ENCODE measurements at regions of chr10 and their contacts with region 1.

Region 1: DNA sequence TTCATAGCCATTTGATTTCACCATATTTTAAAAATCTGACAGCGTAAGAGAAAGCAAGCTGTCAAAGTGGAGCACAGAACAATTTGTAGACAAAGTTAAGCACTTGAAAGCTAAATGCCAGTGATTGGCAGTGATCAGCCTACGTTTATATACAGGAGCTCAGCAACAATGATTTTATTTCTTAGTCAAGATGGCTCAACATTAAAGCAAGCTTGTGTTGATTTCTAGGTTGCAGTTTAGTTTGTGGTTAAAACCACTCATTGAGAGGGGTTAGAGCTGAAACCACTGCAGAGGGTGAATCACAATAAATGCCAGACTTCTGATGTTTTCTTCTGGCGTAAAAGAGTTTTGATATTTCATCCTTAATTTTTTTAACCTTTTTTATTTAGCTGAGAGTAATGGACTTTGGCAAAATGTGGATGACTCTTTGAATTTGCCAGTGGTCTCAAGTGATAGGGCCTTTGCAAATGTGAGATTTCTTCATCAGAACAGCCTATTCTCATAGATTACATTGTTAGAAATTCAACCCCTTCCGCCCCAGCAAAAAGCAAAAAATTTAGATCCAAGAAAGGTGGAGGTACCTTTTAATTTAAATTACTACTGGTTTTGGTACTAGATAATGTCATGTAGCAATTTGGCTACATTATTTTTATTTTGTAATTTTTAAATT is 73.8 kb downstream of the SHOC2 start:
- DNase-seq: peak; percentile 21
- H3K4me3 Mint-ChIP-seq: peak overlapping the region; percentile 63
- H3K27ac Mint-ChIP-seq: no peak overlapping the region
- H3K4me1 Mint-ChIP-seq: peaks cover 43% of the 10 kb centered on the region
- H3K27me3 Mint-ChIP-seq: no peaks in the 10 kb centered on the region

Region 2: DNA sequence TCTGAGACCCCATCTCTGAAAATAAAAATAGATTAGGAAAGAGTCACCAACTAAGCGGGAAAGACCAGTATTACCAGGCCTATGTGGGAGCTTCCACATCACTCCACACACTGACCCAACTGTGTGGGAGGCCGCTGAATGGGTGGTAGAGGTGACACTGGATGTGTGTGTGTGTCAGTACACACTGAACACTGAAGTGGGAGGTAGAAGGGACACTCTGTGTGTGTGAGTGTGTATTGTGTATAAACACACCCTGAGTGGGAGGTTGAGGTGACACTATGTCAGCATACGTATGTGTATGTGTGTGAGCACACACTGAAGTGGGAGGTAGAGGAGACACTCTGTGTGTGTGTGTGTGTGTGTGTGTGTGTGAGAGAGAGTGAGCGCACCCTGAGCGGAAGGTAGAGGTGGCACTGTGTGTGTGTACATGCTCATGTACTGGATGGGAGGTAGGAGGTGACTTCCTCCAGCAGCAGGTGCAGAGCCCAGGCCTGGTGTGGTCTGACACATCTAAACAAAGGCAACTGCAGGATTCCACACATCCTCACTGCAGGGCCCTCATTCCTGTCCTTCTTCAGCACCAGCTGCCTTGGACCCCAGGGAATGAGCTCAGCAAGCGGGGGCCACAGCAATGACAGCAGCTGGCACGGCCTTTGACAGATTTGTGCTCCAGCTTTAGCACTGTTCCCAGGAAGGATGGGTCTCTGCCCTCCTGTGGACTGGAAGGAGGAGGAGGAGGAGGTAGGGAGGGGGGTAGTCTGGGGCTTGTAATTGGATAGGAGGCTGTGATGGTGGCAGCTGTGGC is 375.5 kb before region 1 on chr10:
- intact Hi-C with region 1: loop called (anchors 1 kb)
- DNase-seq: no peak
- H3K4me3 Mint-ChIP-seq: peak overlapping the region; percentile 47
- H3K27ac Mint-ChIP-seq: peak overlapping the region; percentile 93
- H3K4me1 Mint-ChIP-seq: peaks cover 60% of the 10 kb centered on the region
- H3K27me3 Mint-ChIP-seq: peaks cover 7% of the 10 kb centered on the region

Region 3: GRCh38 chr10:110977662-110978061 is 15.5 kb before region 1 on chr10:
- intact Hi-C with region 1: loop called (anchors 2 kb)
- DNase-seq: no peak
- H3K4me3 Mint-ChIP-seq: no peak overlapping the region
- H3K27ac Mint-ChIP-seq: no peak overlapping the region
- H3K4me1 Mint-ChIP-seq: peaks cover 29% of the 10 kb centered on the region
- H3K27me3 Mint-ChIP-seq: no peaks in the 10 kb centered on the region

Region 4: GRCh38 chr10:111030042-111030750 is 37.0 kb after region 1 on chr10:
- intact Hi-C with region 1: loop called (anchors 5 kb)
- DNase-seq: no peak
- H3K4me3 Mint-ChIP-seq: no peak overlapping the region
- H3K27ac Mint-ChIP-seq: peak overlapping the region; percentile 29
- H3K4me1 Mint-ChIP-seq: peaks cover 14% of the 10 kb centered on the region
- H3K27me3 Mint-ChIP-seq: no peaks in the 10 kb centered on the region

Region 5: GRCh38 chr10:112526139-112526538 is 1533.0 kb after region 1 on chr10:
- intact Hi-C with region 1: loop called (anchors 10 kb)
- DNase-seq: no peak
- H3K4me3 Mint-ChIP-seq: no peak overlapping the region
- H3K27ac Mint-ChIP-seq: no peak overlapping the region
- H3K4me1 Mint-ChIP-seq: peaks cover 24% of the 10 kb centered on the region
- H3K27me3 Mint-ChIP-seq: peaks cover 6% of the 10 kb centered on the region